OCI-LY7 (cell line): ENCODE measurements at regions of chr1 and their contacts with region 1.

Region 1: GRCh38 chr1:106254746-106255145 is 801.7 kb upstream of the PRMT6 start:
- DNase-seq: no peak
- H3K4me3 ChIP-seq: no peak overlapping the region
- H3K27ac ChIP-seq: no peak overlapping the region
- H3K4me1 ChIP-seq: no peaks in the 10 kb centered on the region
- CTCF ChIP-seq: no peak

Region 2: GRCh38 chr1:106217770-106218169 is 37.0 kb before region 1 on chr1:
- CTCF ChIA-PET with region 1: no interaction called
- POLR2A ChIA-PET with region 1: no interaction called
- intact Hi-C with region 1: loop called (anchors 1 kb)
- DNase-seq: no peak
- H3K4me3 ChIP-seq: no peak overlapping the region
- H3K27ac ChIP-seq: no peak overlapping the region
- H3K4me1 ChIP-seq: no peaks in the 10 kb centered on the region
- CTCF ChIP-seq: no peak

Region 3: DNA sequence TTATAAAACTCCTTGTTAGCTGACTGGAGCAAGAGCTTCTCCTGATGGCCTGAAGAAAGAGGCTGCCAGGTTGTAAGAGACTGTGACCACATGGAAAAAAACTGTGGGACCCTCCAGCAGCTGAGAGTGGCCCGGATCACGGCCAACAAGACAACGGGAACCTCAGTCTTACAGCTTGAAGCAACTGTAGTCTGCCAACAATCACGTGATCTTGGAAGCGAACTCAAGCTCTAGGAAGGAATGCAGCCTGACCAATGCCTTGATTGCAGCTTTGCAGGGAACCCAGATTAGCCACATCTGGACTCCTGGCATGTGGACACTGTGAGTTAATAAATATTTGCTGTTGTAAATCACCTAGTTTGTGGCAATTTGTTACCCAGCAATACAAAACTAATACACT is 359.1 kb after region 1 on chr1:
- CTCF ChIA-PET with region 1: no interaction called
- POLR2A ChIA-PET with region 1: no interaction called
- intact Hi-C with region 1: no loop called
- DNase-seq: no peak
- H3K4me3 ChIP-seq: no peak overlapping the region
- H3K27ac ChIP-seq: no peak overlapping the region
- H3K4me1 ChIP-seq: no peaks in the 10 kb centered on the region
- CTCF ChIP-seq: no peak